Activated CD8-positive, alpha-beta T cell treated with anti-CD3 and anti-CD28 coated beads for 36 hours (primary cell): ENCODE measurements at regions of chr6 and their contacts with region 1.

Region 1: DNA sequence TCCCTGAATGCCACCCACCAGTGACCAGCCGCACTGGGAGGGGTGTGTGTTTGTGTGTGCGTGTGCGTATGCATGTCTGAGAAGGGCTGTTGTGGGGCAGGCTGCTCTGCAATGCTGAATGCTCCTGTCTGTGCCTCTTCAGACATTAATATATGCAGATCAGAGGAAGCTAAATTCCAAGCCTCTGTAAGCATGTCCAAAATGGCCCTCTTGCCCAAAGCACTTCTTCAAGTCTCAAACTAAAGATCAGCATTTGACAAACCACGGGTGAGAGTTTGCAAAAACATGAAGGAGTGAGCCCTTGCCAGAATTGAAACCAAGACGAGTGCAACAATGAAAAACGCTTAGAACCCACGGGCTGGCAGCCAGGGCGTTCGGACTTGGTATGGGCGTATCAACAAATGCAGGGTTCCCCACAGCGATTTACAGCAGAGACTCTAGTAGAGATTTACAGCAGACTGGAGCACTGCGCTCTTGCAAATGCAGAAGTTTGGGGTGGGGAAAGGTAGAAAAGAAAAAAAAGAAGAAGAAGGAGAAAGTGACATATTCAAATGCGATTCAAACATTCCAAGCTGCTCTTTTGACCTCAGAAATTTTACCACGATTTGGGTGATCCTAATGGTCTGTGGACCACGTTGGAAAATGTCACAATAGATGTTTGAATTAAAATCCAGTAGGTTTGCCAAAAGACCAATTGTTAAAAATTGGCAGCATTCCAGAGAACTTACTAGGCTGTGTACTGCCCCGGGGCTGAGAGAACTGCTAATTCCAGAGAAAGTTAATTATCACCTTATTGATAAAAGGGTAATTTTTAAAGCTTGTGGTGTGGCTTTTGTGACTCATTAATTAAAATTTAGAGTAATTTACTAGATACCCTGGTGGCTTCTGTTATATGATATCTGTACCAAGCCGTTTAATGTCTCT is 3.5 kb downstream of the SCML4 start:
- DNase-seq: peak; percentile 58
- ATAC-seq: peak; percentile 7
- H3K4me3 Mint-ChIP-seq: peak overlapping the region; percentile 88
- H3K27ac Mint-ChIP-seq: peak overlapping the region; percentile 94
- H3K4me1 Mint-ChIP-seq: peaks cover 82% of the 10 kb centered on the region
- H3K27me3 Mint-ChIP-seq: no peaks in the 10 kb centered on the region
- CTCF ChIP-seq: no peak

Region 2: GRCh38 chr6:107506145-107506544 is 314.5 kb before region 1 on chr6:
- CTCF ChIA-PET with region 1: no interaction called
- POLR2A ChIA-PET with region 1: no interaction called
- intact Hi-C with region 1: no loop called
- DNase-seq: no peak
- ATAC-seq: no peak
- H3K4me3 Mint-ChIP-seq: no peak overlapping the region
- H3K27ac Mint-ChIP-seq: no peak overlapping the region
- H3K4me1 Mint-ChIP-seq: no peaks in the 10 kb centered on the region
- H3K27me3 Mint-ChIP-seq: peaks cover 12% of the 10 kb centered on the region
- CTCF ChIP-seq: no peak

Region 3: GRCh38 chr6:107716688-107717089 is 103.9 kb before region 1 on chr6:
- CTCF ChIA-PET with region 1: interaction called, 10 read pairs
- POLR2A ChIA-PET with region 1: interaction called, 16 read pairs
- intact Hi-C with region 1: loop called (anchors 5 kb)
- DNase-seq: peak; percentile 89
- ATAC-seq: peak; percentile 73
- H3K4me3 Mint-ChIP-seq: peak overlapping the region; percentile 49
- H3K27ac Mint-ChIP-seq: peak overlapping the region; percentile 84
- H3K4me1 Mint-ChIP-seq: peaks cover 69% of the 10 kb centered on the region
- H3K27me3 Mint-ChIP-seq: no peaks in the 10 kb centered on the region
- CTCF ChIP-seq: no peak

Region 4: DNA sequence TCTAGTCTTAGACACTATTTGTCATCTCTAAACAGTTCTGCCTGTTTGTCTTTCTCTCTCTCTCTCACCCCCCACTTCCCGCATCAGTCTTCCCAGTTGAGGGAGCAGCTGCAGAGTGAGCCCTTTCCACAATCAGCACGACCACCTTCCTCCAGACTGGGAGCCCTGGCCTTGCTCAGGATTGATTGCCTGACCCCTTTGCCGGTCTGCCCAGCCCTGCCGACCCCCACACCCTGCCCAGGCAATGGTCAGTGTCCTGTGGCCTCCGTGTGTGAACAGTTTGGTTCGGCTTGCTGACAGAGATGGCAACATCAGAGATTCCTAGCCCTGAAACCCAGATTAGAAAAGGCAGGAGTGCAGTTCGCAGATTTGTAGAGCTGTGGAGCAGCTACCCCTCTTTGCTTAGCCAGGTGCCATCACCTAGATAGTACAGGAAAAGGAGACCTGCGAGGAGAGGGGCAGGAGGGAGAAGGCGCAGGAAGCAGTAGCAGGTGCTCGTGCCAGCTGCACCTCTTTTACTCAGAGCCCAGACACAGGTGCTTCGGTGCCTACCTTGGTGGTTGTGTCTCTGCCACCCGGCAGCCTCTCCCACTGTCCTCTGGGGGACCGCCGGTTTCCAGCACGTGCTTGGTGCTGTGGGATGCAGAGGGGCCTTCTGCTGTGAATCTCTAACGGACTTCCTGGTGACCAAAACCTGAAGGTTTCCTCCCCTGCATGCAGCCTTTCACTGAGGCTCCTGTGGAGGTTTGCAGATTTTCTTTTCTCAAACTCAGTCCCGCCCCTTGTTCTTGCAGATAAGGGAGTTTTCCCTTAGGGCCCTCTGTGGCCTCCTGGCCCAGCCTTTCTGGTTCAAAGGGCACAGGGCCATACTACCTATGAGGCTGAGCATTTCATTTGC is 88.9 kb before region 1 on chr6:
- CTCF ChIA-PET with region 1: interaction called, 6 read pairs
- POLR2A ChIA-PET with region 1: interaction called, 41 read pairs
- intact Hi-C with region 1: loop called (anchors 5 kb)
- DNase-seq: peak; percentile 50
- ATAC-seq: peak; percentile 51
- H3K4me3 Mint-ChIP-seq: peak overlapping the region; percentile 89
- H3K27ac Mint-ChIP-seq: peak overlapping the region; percentile 90
- H3K4me1 Mint-ChIP-seq: peaks cover 70% of the 10 kb centered on the region
- H3K27me3 Mint-ChIP-seq: no peaks in the 10 kb centered on the region
- CTCF ChIP-seq: no peak

Region 5: DNA sequence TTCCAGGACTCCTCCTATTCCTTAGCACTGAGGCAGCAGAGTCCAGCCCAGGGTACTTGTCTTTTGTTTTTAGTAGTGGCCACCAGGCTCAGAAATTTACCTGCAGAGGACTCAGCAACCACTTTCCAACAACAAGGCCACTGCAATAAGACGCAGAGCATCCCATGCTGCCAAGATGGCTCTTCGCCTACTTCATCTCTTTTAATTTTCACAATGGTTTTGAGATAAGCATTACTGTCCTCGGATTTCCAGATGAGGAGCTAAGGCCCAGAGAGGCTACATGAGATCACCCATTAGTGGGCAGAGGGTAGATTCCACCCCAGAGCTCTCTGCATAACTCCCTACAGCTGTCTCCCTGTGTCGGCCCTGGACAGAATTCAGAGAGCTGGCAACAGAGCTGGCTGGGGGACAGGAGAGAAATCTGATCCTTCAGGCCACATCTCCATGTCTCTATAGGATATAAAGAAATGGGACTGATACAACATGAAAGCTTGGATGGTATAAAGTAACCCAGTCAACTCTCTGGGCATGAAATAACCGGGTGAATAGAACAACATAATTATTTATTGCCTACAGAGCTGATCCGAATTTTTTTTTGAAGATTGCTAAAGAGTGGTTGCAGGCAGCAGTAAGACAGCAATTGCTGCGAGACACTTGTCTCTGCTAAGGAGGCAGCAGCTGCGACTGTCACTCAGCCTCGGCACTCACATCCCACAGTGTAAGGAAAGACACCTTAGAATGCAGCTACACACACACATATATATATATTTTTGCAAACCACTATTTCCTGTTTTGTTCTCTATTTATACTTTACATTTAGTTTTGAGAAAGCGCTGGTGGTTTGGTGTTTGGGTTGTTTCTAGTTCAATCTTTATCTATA is 33.7 kb before region 1 on chr6:
- CTCF ChIA-PET with region 1: interaction called, 4 read pairs
- POLR2A ChIA-PET with region 1: interaction called, 7 read pairs
- intact Hi-C with region 1: loop called (anchors 5 kb)
- DNase-seq: peak; percentile 56
- ATAC-seq: peak; percentile 45
- H3K4me3 Mint-ChIP-seq: peak overlapping the region; percentile 49
- H3K27ac Mint-ChIP-seq: peak overlapping the region; percentile 74
- H3K4me1 Mint-ChIP-seq: peaks cover 84% of the 10 kb centered on the region
- H3K27me3 Mint-ChIP-seq: no peaks in the 10 kb centered on the region
- CTCF ChIP-seq: no peak

Region 6: GRCh38 chr6:107806691-107807090 is 13.9 kb before region 1 on chr6:
- CTCF ChIA-PET with region 1: interaction called, 12 read pairs
- POLR2A ChIA-PET with region 1: interaction called, 43 read pairs
- intact Hi-C with region 1: no loop called
- DNase-seq: no peak
- ATAC-seq: no peak
- H3K4me3 Mint-ChIP-seq: no peak overlapping the region
- H3K27ac Mint-ChIP-seq: peak overlapping the region; percentile 78
- H3K4me1 Mint-ChIP-seq: peaks cover 65% of the 10 kb centered on the region
- H3K27me3 Mint-ChIP-seq: no peaks in the 10 kb centered on the region
- CTCF ChIP-seq: no peak

Region 7: GRCh38 chr6:107917451-107918375 is 97.1 kb after region 1 on chr6:
- CTCF ChIA-PET with region 1: no interaction called
- POLR2A ChIA-PET with region 1: no interaction called
- intact Hi-C with region 1: no loop called
- DNase-seq: no peak
- ATAC-seq: peak; percentile 51
- H3K4me3 Mint-ChIP-seq: no peak overlapping the region
- H3K27ac Mint-ChIP-seq: peak overlapping the region; percentile 55
- H3K4me1 Mint-ChIP-seq: peaks cover 12% of the 10 kb centered on the region
- H3K27me3 Mint-ChIP-seq: no peaks in the 10 kb centered on the region
- CTCF ChIP-seq: no peak